ENCODE measurements at regions of chr20 and their contacts with region 1.

Region 1: GRCh38 chr20:45415774-45416637 is at the start of gene PIGT:
- DNase-seq: peak; percentile 64 to 94
- H3K4me3 ChIP-seq: peak within 1 kb of the TSS; percentile 89 to 91
- H3K27ac ChIP-seq: peak within 1 kb of the TSS; percentile 76 to 83
- H3K4me1 ChIP-seq: peaks cover 6 to 25% of the 10 kb centered on the region in 2 donors
- H3K27me3 ChIP-seq: no peaks in the 10 kb centered on the region
- CTCF ChIP-seq: no peak
- total RNA-seq, gene PIGT: 142 TPM

Region 2: GRCh38 chr20:45373353-45374100 is 42.5 kb before region 1 on chr20:
- intact Hi-C with region 1: loop called (anchors 1 kb)
- DNase-seq: peak in 1 of 2 donors; percentile 93
- H3K4me3 ChIP-seq: peak overlapping the region; percentile 60 to 65
- H3K27ac ChIP-seq: peak overlapping the region; percentile 84 to 92
- H3K4me1 ChIP-seq: peaks cover 0 to 11% of the 10 kb centered on the region in 2 donors
- H3K27me3 ChIP-seq: no peaks in the 10 kb centered on the region
- CTCF ChIP-seq: peak; percentile 84 to 90 (median 86)